Posterior vena cava (tissue), 2 donors: ENCODE measurements at regions of chr1 and their contacts with region 1.

Region 1: GRCh38 chr1:11645670-11646265 is 8.5 kb downstream of the FBXO2 start:
- DNase-seq: peak; percentile 94

Region 2: DNA sequence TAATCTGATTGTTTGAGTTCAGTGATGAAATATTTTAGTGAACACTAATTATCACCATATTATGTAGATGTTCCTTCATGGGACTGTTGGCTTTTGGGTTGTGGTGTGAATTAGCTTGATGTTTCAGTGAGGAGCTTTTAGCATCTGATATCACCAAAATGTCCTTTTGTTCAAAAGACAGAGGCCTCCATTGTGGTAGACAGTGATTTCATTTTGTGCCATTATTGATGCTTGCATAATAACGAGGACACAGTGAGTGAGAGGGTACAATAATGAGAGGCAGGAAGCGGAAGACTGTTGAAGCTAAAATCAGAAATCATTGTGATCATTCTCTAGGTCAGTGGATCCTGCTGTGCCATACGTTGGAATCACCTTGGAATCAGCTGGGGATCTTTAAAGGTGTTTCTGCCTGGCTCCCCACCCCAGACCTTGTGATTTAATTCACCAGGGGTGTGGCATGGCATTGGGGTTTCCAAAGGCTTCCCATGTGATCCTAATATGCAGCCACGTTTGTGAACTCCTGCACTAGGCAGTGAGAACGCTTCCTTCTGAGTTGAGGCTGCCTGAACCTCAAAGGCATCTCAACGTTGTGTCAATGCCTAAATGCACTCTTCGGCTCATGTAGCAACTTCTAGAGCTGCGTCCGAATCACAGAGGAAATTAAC is 1517.5 kb before region 1 on chr1:
- intact Hi-C with region 1: no loop called
- DNase-seq: no peak

Region 3: DNA sequence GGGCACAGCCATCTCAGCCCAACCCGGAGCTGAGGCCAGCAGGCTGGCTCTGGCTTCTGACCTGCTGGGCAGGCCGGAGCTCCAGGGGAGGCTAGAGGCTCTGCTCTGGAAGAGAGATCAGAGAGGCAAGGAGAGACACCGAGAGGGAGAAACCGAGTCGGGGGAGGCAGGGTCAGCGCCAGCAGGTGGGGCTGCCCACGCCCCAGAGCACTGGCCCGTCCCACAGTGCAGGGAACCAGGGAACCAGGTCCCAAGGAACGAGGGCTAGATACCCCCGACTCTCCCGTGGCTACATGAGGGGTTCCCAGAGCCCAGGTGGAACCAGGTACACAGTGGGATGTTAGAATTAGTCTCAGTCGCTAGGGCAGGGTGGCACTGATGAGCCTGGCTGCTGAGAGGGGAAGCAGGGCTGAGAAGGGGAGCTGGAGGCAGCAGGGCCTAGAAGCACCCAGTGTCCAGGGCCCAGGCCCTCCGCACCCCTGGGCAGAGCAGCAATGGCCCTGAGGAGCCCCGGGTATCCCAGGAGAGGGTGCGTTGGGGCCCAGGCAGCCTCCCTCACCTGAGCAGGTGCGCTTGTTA is 600.8 kb before region 1 on chr1:
- intact Hi-C with region 1: loop called in 1 of 2 experiments (anchors 5 kb)
- DNase-seq: no peak

Region 4: DNA sequence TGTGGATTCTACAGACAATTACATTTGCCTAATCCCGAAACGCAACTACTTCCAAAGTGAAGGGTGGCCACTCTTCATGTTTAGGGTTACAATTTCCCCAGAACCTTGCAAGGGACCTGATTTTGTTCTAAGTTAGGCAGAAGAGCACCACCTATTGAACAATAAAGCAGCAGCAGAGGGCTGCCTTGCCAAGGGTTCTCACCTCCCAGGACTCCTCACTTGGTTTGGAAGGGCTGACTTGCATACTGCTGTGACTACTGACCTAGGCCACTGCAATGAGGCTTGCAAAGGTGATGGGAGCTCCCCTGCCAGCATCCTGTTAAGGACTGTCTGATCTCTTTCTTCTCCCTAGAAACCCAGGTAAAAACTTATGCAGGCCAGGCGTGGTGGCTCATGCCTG is 397.6 kb before region 1 on chr1:
- intact Hi-C with region 1: loop called in 1 of 2 experiments (anchors 5 kb)
- DNase-seq: no peak

Region 5: DNA sequence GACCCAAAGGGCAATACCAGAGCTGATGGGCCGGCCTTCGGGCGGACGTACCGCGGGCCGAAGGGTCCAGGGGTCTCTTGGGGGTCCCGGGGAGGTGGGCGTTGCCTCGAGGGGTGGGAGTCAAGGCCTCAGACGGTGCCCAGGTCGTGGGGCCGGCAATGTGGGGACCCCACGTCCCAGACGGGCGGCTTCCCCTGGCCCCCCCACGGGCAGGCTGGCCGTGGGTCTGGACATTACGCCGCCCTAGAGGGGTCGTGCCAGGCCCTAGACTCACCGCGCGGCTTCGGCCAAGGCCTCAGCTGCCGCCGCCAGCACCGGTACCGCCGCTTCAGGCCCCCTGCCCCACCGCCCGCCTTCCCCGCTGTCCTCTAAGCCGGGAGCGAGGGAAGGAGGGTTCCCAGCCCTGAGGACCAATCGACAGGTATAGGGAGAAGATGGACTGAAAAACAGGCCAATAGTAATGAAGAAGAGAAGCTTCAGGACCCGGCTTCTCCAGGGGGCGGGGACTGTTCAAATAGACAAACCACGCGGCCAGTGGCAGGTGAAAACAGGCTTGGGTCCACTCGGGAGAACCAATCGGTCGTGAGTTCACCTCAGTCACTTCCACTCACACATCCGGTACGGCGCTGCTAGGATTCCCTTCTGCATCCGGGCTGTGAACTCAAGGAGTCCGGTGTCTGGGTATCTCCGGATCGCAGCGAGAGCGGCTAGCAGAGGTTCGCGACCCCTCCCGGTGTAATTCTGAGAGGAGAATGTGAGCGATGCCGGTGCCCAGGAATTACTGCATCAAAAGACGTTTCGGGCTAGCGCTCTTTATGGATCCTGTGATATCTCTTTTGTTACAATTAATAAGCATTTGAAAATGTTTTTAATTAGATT is 383.4 kb before region 1 on chr1 and contains the start of gene MTOR:
- intact Hi-C with region 1: loop called in 1 of 2 experiments (anchors 10 kb)
- DNase-seq: peak; percentile 99
- total RNA-seq, gene MTOR: 26.3 to 26.7 TPM

Region 6: DNA sequence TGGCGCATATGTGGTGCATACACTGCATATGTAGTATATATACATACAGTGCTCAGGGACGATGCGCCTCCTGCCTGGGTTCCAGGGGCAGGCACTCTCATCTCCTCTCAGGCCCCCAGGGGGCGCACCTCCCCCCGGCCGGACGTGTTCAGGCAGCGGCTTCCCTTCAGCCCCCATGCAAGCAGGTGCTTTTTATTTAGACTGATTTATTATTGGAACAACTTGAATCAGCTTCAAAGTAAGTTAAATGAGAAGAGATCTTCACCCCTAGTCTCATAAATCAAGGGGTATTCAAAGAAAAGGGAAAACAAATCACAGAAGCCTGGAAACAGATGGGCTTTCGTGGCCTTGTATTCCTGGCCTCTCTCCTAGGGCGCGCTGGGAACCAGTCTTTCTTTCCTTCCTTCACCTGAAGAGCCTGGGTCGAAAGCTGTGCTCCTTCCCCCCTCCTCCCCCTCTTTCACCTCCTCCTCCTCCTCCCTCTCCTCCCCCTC is 308.1 kb before region 1 on chr1:
- intact Hi-C with region 1: loop called in 1 of 2 experiments (anchors 10 kb)
- DNase-seq: no peak

Region 7: GRCh38 chr1:11658308-11658941 is 12.7 kb after region 1 on chr1:
- intact Hi-C with region 1: no loop called
- DNase-seq: no peak

Region 8: DNA sequence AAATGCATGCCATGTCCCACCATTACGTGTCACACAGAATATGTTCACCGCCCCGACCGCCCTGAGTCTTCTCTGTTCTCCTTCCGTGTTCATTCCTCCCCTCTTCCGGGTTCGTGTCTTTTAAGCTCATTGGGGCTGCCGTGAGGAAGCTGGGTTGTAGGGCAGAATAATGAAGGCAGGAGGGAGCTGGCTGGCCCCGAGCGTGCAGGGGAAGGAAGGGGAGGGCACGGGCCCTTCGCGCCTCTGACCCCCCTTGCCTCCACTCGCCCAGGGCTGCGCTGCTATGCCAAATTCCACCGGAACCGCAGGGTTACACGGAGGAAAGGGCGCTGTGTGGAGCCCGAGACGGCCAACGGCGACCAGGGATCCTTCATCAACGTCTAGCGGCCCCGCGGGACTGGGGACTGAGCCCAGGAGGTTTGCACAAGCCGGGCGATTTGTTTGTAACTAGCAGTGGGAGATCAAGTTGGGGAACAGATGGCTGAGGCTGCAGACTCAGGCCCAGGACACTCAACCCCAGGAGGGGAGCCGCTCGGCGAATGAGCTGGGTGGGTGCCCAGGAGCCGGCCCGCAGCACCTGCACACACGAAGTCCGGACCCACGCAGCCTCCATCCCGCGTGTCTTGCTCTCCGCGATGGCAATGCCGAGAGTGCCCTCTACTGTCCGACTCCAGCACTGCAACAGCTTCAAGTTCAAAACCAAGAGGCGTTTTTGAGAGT is 73.7 kb after region 1 on chr1:
- intact Hi-C with region 1: loop called in 1 of 2 experiments (anchors 5 kb)
- DNase-seq: peak; percentile 96